ENCODE measurements at regions of chr13 and their contacts with region 1.

Region 1: DNA sequence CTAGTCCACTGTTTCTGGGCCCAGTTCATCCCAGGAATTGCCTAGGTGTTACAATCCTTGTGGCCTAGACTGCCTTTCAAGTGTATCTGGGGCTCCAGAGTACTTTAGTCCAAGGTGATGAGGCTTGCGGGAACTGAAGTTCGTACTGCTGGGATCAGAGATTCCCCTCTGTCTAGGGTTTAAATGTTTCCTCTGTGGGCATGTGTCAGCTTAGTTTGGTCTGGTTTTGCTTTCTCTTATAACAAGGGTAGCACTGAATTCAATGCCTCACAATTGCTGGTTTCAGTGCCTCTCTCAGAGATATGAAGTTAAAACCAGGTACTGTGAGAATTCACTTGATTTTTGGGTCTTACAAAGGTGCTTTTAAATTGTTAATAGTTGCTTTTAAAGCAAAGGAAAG is 30.8 kb downstream of the RGCC start:
- DNase-seq: no peak
- H3K4me3 ChIP-seq: no peak overlapping the region
- H3K27ac ChIP-seq: no peak overlapping the region
- H3K27me3 ChIP-seq: no peaks in the 10 kb centered on the region
- CTCF ChIP-seq: no peak

Region 2: DNA sequence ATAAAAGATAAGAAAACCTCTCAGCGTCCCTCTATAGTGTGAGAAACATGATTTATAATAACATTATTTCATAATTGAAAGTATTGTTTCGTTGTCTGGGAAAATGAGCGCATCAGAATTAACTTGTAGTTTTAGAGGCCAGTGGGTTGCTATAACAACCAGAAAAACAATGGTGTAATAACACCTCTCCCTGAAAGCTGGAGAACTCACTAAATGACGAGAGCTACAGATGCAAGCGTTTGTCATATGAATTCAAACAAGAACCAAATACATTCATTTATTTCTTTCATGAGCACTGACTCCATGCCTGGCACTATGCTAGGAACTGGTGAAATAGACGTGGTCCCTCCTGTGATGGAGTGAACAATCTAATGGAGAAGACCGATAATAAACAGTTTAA is 310.1 kb before region 1 on chr13:
- intact Hi-C with region 1: no loop called
- DNase-seq: no peak
- H3K4me3 ChIP-seq: no peak overlapping the region
- H3K27ac ChIP-seq: no peak overlapping the region
- H3K27me3 ChIP-seq: no peaks in the 10 kb centered on the region
- CTCF ChIP-seq: no peak

Region 3: DNA sequence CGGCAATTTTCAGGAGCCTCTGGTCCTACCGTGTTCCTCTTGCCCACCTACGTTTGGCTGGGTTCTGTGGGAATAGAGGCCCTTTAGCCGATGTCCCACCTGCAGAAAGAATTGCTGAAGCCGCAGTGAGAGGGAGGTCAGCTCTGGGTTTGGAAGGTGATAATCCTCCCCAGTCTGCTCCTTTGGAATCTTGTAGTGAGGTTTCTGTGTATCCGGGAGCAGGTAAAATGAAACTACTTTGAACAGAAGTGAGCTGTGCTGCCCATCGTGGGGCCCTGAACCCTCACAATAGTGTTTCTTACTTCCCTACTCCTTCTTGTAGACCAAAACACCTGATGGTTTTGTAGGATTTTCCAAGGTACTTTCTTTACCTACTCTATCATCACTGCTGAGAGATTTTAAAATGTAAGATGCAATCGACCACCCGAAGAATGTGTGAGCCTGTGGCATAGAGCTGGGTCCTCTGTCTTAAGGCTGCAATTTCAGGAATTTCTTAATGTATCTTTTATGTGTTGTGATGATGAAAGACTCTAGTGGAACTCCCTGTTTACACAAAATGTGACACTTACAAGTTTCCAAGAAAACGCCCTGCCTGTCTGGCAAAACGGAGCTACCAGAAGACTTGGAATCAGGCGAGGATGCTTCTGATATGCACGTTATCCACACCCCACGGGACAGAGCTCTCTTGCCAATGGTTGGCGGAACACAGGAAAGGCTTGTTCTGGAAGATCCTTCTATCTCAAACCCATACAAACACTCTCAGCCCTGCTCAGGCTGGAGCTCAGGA is 45.3 kb after region 1 on chr13:
- intact Hi-C with region 1: loop called in 1 of 2 experiments (anchors 5 kb)
- DNase-seq: no peak
- H3K4me3 ChIP-seq: no peak overlapping the region
- H3K27ac ChIP-seq: peak overlapping the region in 13 of 59 donors; percentile 18 to 69 (median 40)
- H3K27me3 ChIP-seq: no peaks in the 10 kb centered on the region
- CTCF ChIP-seq: no peak